Activated CD8-positive, alpha-beta T cell treated with anti-CD3 and anti-CD28 coated beads for 36 hours (primary cell): ENCODE measurements at regions of chr3 and their contacts with region 1.

Region 1: DNA sequence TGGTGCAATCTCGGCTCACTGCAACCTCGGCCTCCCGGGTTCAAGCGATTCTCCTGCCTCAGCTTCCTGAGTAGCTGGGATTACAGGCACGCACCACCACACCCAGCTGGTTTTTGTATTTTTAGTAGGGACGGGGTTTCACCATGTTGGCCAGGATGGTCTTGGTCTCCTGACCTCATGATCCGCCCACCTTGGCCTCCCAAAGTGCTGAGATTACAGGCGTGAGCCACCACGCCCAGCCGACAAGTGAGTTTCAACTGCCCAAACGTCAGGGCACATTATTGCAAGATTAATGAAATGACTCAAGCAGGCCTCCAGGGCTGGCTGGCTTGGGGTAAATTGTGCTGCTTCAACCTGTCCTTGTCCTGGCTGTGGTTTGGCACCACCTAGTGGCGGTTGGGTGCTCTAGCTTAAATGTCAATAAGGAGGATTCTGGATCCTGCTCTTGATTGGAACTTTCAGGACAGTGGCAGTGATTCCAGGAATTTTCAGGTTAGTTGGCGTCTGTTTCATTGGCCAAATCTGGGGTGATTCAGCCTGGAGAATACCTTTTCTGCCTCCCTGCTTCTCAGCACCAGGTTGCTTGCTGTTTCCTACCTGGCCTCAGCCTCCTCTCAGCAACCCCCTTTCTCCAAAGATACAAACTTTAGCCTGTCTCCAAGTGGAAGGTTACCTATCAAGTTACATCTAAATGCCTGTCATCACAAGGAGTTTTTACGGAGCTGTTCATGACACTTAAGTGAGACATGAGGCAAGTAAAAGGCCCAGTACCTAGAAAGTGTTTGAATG is 32.4 kb upstream of the SACM1L start:
- DNase-seq: peak; percentile 94
- ATAC-seq: peak; percentile 97
- H3K4me3 Mint-ChIP-seq: no peak overlapping the region
- H3K27ac Mint-ChIP-seq: no peak overlapping the region
- H3K4me1 Mint-ChIP-seq: peaks cover 14% of the 10 kb centered on the region
- H3K27me3 Mint-ChIP-seq: no peaks in the 10 kb centered on the region
- CTCF ChIP-seq: peak; percentile 91

Region 2: GRCh38 chr3:45515999-45516725 is 140.6 kb before region 1 on chr3:
- CTCF ChIA-PET with region 1: interaction called, 57 read pairs
- POLR2A ChIA-PET with region 1: no interaction called
- intact Hi-C with region 1: loop called (anchors 2 kb)
- DNase-seq: no peak
- ATAC-seq: no peak
- H3K4me3 Mint-ChIP-seq: no peak overlapping the region
- H3K27ac Mint-ChIP-seq: no peak overlapping the region
- H3K4me1 Mint-ChIP-seq: no peaks in the 10 kb centered on the region
- H3K27me3 Mint-ChIP-seq: no peaks in the 10 kb centered on the region
- CTCF ChIP-seq: no peak

Region 3: GRCh38 chr3:45593708-45594609 is 62.8 kb before region 1 on chr3:
- CTCF ChIA-PET with region 1: interaction called, 21 read pairs
- POLR2A ChIA-PET with region 1: no interaction called
- intact Hi-C with region 1: loop called (anchors 5 kb)
- DNase-seq: peak; percentile 74
- ATAC-seq: peak; percentile 87
- H3K4me3 Mint-ChIP-seq: peak overlapping the region; percentile 78
- H3K27ac Mint-ChIP-seq: peak overlapping the region; percentile 86
- H3K4me1 Mint-ChIP-seq: peaks cover 46% of the 10 kb centered on the region
- H3K27me3 Mint-ChIP-seq: no peaks in the 10 kb centered on the region
- CTCF ChIP-seq: no peak

Region 4: GRCh38 chr3:45670991-45671390 is 14.2 kb after region 1 on chr3:
- CTCF ChIA-PET with region 1: interaction called, 30 read pairs
- POLR2A ChIA-PET with region 1: interaction called, 5 read pairs
- intact Hi-C with region 1: no loop called
- DNase-seq: no peak
- ATAC-seq: no peak
- H3K4me3 Mint-ChIP-seq: no peak overlapping the region
- H3K27ac Mint-ChIP-seq: no peak overlapping the region
- H3K4me1 Mint-ChIP-seq: peaks cover 28% of the 10 kb centered on the region
- H3K27me3 Mint-ChIP-seq: no peaks in the 10 kb centered on the region
- CTCF ChIP-seq: no peak

Region 5: GRCh38 chr3:45688882-45689756 is 32.4 kb after region 1 on chr3 and contains the start of gene SACM1L:
- CTCF ChIA-PET with region 1: interaction called, 27 read pairs
- POLR2A ChIA-PET with region 1: no interaction called
- intact Hi-C with region 1: no loop called
- DNase-seq: peak; percentile 97
- ATAC-seq: peak; percentile 83
- H3K4me3 Mint-ChIP-seq: peak within 1 kb of the TSS; percentile 81
- H3K27ac Mint-ChIP-seq: peak within 1 kb of the TSS; percentile 95
- H3K4me1 Mint-ChIP-seq: peaks cover 41% of the 10 kb centered on the region
- H3K27me3 Mint-ChIP-seq: peaks cover 3% of the 10 kb centered on the region
- CTCF ChIP-seq: no peak
- total RNA-seq, gene SACM1L: 52.6 to 56.0 TPM